Activated T-helper 1 cell treated with anti-CD3 and anti-CD28 coated beads, Interleukin-12 subunit alpha, Interleukin-12 subunit beta, Interleukin-2, Interleukin-4 antibody, amounts not matched to agents 30 ng/mL and 10 ng/mL and 1 ng/mL, durations not matched to agents 14 hours and 24 hours and 36 hours (primary cell): ENCODE measurements at regions of chr7 and their contacts with region 1.

Region 1: DNA sequence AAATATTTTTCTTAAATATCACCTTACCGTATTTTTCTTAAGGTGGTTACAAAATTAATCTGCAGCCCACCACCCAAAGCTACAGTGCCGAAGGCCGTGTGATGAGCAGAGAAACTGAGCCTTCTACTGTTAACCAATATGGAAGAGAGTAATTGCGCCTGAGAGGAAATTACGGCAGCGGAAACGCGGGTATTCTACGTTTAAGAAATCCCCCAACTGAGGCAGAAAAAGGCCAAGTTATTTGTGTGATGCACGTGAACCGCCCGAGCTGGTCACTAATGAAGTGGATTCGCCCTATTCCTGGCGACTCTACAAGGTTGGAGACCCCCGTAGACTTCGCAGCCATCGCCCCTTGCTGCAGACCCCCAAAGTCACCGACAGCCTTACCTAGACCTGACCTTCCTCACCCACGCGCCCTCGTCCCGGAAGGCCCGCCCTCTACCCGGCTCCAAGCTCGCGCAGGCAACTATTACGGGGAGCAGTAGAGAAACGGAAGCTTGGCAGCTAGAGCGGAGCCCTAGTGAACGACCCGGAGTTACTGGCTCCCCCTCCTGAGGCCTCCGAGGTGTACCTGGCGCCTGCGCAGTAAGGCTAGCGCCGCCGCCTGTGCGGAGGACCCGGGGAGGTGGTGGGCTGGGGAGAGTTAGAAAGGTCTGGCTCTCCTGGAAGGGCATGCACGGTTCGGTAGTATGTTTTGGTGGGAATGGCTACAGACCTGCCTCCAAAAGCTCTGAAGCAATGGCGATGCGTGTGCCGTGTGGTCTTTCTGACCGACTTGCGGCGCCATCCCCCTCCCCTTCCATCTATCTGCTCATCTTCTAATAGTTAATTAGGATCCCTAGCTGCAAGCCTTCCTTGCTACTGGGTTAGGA is at the start of gene MRPS33:
- DNase-seq: peak; percentile 94
- H3K4me3 Mint-ChIP-seq: peak within 1 kb of the TSS; percentile 92
- H3K27ac Mint-ChIP-seq: peak within 1 kb of the TSS; percentile 98
- H3K4me1 Mint-ChIP-seq: peaks cover 40% of the 10 kb centered on the region
- H3K27me3 Mint-ChIP-seq: peaks cover 14% of the 10 kb centered on the region
- total RNA-seq, gene MRPS33: 63.0 and 73.9 TPM in 2 replicates

Region 2: DNA sequence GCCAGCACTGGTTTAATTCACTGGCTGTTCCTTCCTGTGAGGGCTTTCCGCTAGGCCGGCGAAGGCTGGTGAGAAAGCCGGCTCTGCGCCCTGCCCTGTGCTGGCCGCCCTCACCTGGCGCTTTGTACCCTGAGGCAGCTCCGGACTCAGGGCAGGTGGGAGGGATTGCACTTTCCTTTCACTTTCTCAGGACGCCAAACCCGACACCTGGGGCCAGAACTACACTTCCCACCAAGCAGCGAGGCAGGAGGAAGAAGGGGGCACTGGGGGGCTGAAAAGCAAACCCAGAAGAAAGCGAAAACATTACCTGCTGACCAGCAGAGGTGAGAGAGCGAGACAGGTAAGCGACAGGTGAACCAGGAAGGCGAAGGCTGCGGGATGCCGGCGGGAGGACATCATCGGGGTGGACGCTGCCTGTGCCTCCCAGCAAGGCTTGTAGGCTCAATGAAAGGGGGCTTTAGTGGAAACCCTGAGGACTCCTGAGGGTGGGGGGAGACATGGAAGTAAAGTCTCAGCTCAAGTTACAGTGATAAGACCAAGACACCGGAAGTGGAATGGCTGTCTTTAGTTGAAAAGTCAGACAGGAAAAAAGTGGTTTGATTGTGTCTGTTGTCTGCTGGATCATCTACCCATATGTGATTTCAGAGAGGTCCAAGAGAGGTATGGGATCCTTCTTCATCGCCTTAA is 610.7 kb before region 1 on chr7 and contains the start of gene RAB19:
- intact Hi-C with region 1: loop called (anchors 5 kb)
- DNase-seq: peak; percentile 26
- H3K4me3 Mint-ChIP-seq: peak within 1 kb of the TSS; percentile 95
- H3K27ac Mint-ChIP-seq: peak within 1 kb of the TSS; percentile 90
- H3K4me1 Mint-ChIP-seq: peaks cover 49% of the 10 kb centered on the region
- H3K27me3 Mint-ChIP-seq: no peaks in the 10 kb centered on the region
- total RNA-seq, gene RAB19: 23.9 and 27.0 TPM in 2 replicates

Region 3: DNA sequence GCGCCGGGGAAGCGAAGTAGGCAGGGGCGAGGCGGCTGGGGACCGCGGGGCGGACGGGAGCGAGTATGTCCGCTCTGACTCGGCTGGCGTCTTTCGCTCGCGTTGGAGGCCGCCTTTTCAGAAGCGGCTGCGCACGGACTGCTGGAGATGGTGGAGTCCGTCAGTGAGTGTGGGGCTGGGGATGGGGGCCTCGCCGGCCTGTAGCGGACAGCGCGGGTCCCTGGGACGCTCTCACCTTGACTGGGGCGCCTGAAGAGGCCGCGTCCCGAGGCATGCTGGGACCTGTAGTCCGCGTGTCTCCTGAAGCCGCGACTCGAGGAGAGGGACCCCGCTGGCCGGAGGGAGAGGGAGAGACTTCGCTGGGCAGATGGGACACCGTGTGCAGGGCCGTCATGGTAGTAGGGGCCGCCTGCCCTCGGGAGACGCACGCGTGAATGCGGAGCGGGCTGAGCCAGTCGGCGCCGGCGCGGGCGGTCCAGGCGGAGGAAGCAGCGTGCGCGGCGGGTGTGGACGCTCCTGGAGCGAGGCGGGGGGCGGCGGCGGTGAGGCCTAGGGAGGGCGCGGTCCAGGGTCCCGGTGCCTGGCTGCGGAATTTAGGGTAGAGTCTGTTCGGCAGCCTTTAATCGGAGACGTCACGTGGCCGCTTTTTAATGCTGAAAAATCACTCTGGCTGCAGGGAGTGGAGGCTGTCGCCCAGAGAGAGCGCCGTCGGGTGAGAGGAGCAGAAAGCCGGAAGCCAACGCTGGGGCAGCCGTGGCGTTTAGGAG is 317.9 kb before region 1 on chr7 and contains the start of gene NDUFB2:
- intact Hi-C with region 1: loop called (anchors 1 kb)
- DNase-seq: peak; percentile 85
- H3K4me3 Mint-ChIP-seq: peak within 1 kb of the TSS; percentile 90
- H3K27ac Mint-ChIP-seq: peak within 1 kb of the TSS; percentile 96
- H3K4me1 Mint-ChIP-seq: peaks cover 30% of the 10 kb centered on the region
- H3K27me3 Mint-ChIP-seq: no peaks in the 10 kb centered on the region
- total RNA-seq, gene NDUFB2: 178 and 194 TPM in 2 replicates

Region 4: GRCh38 chr7:140924019-140924820 is 90.5 kb before region 1 on chr7:
- intact Hi-C with region 1: loop called (anchors 1 kb)
- DNase-seq: peak; percentile 69
- H3K4me3 Mint-ChIP-seq: no peak overlapping the region
- H3K27ac Mint-ChIP-seq: no peak overlapping the region
- H3K4me1 Mint-ChIP-seq: peaks cover 11% of the 10 kb centered on the region
- H3K27me3 Mint-ChIP-seq: no peaks in the 10 kb centered on the region

Region 5: GRCh38 chr7:141533149-141533949 is 518.6 kb after region 1 on chr7:
- intact Hi-C with region 1: loop called (anchors 1 kb)
- DNase-seq: peak; percentile 34
- H3K4me3 Mint-ChIP-seq: no peak overlapping the region
- H3K27ac Mint-ChIP-seq: no peak overlapping the region
- H3K4me1 Mint-ChIP-seq: peaks cover 7% of the 10 kb centered on the region
- H3K27me3 Mint-ChIP-seq: peaks cover 20% of the 10 kb centered on the region

Region 6: GRCh38 chr7:141654551-141654950 is 639.8 kb after region 1 on chr7:
- intact Hi-C with region 1: loop called (anchors 5 kb)
- DNase-seq: peak; percentile 52
- H3K4me3 Mint-ChIP-seq: no peak overlapping the region
- H3K27ac Mint-ChIP-seq: peak overlapping the region; percentile 69
- H3K4me1 Mint-ChIP-seq: peaks cover 15% of the 10 kb centered on the region
- H3K27me3 Mint-ChIP-seq: no peaks in the 10 kb centered on the region

Region 7: DNA sequence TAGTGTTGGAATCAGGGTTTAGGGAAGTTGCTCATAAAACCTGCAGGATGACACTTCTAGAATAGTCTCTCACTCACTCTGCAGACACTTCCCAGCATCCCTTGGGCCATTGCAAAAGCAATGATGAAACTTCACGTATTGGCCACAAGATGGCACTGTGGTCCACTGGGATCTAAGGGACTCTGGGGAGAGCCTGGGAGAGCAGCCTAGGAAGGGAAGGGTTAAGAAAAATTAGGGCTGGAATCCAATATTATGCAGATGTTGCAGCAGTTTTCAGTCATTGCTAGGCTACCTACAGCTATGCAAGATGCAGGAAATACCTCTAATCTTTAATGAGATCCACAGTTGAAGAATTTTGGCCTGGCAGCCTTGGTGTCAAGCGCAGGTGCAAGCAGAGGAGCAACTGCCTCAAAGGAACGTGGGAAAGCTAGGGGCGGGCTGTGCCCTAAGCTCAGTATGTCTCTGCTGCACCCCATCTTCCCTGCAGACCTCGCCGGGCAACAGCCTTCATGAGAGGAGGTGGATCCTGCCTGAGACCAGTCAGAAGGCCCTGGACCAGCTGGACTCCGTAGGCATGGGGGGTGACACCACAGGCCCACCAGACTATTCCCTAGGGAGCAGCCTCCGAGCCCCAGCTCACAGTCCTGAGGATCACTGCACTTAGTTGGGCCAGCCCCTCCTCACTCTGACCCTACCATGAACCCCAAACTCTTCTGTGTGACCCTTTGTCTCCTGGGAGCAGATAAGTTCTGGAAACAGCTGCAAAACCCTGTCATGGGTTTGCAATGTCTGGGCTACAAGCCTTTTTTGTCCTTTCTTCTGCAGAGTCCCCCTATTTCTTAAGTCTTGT is 1371.0 kb after region 1 on chr7:
- intact Hi-C with region 1: no loop called
- DNase-seq: peak; percentile 27
- H3K4me3 Mint-ChIP-seq: peak overlapping the region; percentile 65
- H3K27ac Mint-ChIP-seq: peak overlapping the region; percentile 2
- H3K4me1 Mint-ChIP-seq: peaks cover 21% of the 10 kb centered on the region
- H3K27me3 Mint-ChIP-seq: peaks cover 2% of the 10 kb centered on the region